Right ventricle myocardium inferior (tissue), 1 donor: ENCODE measurements at regions of chr11 and their contacts with region 1.

Region 1: GRCh38 chr11:59550368-59550841 is 39.1 kb downstream of the OR4D9 start:
- DNase-seq: peak; percentile 76
- ATAC-seq: peak; percentile 84

Region 2: DNA sequence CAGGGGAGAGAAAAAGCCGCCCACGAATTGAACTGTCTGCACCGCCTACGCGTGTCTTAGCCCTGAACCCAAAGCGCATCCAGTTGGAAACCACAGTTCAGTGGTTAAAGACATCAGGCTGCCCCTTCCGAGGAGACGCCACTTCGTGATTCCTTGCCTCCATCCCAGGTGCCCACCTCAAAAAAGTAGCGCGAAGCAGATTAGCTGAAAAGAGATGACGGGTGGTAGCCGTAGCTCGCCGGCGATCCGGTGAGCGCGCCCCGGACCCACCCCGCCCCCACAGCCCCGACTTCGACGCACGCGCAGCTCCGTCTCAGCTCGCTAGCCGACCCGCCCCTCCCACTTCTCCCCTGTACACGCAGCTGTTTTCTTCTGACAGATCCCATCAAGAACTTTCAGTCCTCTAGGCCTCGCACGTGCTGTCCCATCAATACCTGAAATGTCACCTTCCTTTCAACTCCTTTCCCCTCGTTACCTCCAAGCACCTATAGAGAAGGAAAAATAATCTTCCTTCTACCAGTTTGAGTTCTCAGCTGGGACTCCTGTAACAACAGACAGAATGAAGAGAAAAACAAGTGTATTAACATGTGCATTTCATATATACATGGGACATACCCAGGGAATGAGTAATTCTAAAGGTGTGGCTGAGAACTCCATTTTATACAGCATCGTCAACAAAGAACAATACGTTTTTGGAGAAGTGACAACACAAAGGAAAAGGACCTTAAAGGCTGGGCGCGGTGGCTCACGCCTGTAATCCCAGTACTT is 10.5 kb after region 1 on chr11:
- intact Hi-C with region 1: loop called (anchors 1 kb)
- DNase-seq: peak; percentile 92
- ATAC-seq: peak; percentile 89

Region 3: DNA sequence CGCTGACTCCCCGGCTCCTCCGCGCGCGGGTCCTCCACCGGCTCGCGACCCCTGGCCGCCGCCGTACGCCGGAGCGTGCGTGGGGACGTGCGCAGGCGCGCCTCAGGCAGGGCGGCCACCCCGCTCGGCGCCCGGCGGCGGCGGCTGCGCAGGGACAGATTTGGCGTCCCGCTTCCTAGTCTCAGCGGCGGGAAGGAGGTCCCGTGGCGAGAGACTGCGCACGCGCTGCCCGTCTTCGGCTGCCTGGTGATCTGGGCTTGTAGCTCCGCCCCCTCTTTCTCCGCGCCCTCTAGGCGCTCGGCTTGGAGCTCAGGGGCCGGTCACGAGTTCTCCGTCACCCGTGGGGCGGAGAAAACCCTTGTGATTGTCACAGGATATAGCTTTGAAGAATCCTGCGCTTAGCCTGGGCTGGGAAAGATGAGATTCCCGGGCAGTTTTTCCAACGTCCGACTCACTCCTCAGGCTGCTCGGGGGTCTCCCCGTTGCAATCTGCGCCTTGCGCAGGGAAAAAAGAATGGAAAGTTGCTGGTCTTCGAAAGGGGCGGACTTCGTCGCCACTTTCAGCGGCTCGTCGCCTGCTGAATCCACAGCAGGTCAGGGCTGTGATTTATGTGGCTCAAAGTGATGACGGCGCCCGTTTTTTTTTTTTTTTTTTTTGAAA is 118.7 kb after region 1 on chr11 and contains the start of gene PATL1:
- intact Hi-C with region 1: loop called (anchors 5 kb)
- DNase-seq: peak; percentile 100
- ATAC-seq: peak; percentile 98
- total RNA-seq, gene PATL1: 22.3 TPM

Region 4: GRCh38 chr11:59767225-59767611 is 216.8 kb after region 1 on chr11:
- intact Hi-C with region 1: loop called (anchors 10 kb)
- DNase-seq: no peak
- ATAC-seq: no peak